Right ventricle myocardium inferior (tissue), 1 donor: ENCODE measurements at regions of chr9 and their contacts with region 1.

Region 1: GRCh38 chr9:95080961-95081647 is 236.4 kb downstream of the FANCC start:
- DNase-seq: no peak
- ATAC-seq: no peak

Region 2: DNA sequence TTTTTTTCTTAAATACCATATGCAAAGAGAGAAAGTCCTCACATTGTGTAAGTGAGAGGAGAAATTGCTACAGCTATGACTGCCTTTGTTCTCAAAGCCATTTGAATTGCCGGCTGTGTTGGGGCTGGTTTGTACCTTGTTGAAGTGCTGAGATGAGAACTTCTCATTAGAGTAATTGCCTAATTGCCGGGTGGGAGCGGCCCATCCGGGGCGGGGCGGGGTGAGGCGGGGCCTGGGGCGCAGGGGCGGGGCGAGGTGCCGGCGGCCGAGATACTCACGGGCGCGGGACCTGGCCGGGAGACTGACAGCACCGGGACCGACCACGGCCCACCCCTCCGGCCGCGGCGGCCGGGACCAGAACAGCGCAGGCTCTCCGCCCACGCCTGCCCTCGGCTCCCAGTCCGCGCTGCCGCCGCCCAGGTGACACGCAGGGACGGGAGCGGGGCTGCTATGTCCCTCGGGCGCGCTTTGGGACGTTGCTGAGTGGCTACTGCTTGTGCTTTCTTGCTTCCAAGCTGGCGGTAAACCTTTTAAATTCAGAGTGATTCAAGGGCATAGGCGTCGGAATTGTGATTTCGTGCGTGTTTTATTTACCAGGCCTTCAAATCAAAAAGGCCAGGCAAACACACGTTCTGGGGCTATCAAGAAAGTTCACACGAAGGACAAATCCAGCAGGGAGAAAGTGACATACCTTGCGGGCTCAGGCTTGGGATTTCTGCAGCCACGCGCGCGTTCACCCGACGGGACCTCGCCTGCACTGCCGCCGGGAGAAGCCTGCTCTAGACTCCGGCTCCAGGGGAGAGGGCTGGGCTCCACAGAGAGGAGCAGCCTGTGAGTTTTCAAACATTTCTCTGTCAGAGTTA is 32.6 kb before region 1 on chr9:
- intact Hi-C with region 1: loop called (anchors 5 kb)
- DNase-seq: peak; percentile 89
- ATAC-seq: peak; percentile 80